ENCODE measurements at regions of chr11 and their contacts with region 1.

Region 1: GRCh38 chr11:12331239-12331874 is 46.0 kb upstream of the PARVA start:
- DNase-seq: peak; percentile 43
- H3K4me3 Mint-ChIP-seq: no peak overlapping the region
- H3K27ac Mint-ChIP-seq: no peak overlapping the region
- H3K4me1 Mint-ChIP-seq: peaks cover 3% of the 10 kb centered on the region
- H3K27me3 Mint-ChIP-seq: no peaks in the 10 kb centered on the region

Region 2: DNA sequence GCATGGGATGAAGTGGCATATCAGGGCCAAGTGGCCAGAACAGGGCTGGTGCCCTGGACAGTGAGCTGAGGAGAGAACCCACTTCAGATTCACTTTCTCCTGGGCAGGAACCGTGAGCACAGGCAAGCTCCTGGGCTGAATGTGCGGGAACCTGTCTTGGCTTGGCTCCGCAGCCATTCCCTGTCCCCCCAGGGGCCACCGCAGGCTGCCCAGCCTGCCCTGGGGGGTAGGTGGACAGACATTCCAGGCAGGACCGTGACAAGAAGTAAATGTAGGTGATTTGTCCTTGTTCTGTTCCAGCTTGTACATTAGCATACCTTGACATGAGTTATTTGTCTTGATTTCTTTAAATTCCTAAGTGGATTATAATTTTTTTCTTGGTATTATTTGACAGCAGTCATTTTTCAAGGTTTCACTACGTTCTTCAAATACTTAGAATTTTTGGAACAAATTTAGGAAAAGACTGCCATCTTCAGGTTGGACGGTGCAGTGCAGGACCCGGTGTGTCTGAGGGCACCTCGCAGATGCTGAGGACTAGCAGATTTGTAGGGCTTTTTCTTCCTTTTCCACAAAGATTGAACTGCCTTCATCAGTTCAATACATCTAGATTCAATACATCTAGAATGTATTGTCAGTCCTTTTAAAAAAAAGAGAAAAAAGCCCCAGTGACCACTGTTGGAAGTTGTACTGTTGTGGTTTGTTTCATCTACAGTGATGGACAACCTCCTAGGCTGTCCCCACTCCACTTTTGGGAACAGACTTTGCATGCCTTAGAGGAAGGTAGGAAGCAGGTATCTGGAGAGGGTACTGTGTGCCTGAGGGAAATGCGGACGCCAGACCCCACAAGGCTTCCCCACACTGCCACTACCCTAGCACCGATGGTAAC is 562.7 kb after region 1 on chr11:
- intact Hi-C with region 1: loop called (anchors 2 kb)
- DNase-seq: peak; percentile 30
- H3K4me3 Mint-ChIP-seq: no peak overlapping the region
- H3K27ac Mint-ChIP-seq: no peak overlapping the region
- H3K4me1 Mint-ChIP-seq: no peaks in the 10 kb centered on the region
- H3K27me3 Mint-ChIP-seq: peaks cover 15% of the 10 kb centered on the region

Measured in activated T-helper 2 cell treated with anti-CD3 and anti-CD28 coated beads, Interferon-gamma antibody, Interleukin-2, Interleukin-4, amounts not matched to agents 10 μg/mL and 5 μg/mL and 100 μg/mL, durations not matched to agents 14 hours and 24 hours and 36 hours (primary cell).